Upper lobe of right lung (tissue), 1 donor: ENCODE measurements at regions of chr6 and their contacts with region 1.

Region 1: GRCh38 chr6:111709615-111710398 is 104.1 kb upstream of the TRAF3IP2 start:
- DNase-seq: no peak
- ATAC-seq: peak; percentile 92
- H3K4me3 ChIP-seq: no peak overlapping the region
- H3K27ac ChIP-seq: no peak overlapping the region
- H3K4me1 ChIP-seq: peaks cover 23% of the 10 kb centered on the region
- H3K27me3 ChIP-seq: no peaks in the 10 kb centered on the region
- CTCF ChIP-seq: peak; percentile 81

Region 2: DNA sequence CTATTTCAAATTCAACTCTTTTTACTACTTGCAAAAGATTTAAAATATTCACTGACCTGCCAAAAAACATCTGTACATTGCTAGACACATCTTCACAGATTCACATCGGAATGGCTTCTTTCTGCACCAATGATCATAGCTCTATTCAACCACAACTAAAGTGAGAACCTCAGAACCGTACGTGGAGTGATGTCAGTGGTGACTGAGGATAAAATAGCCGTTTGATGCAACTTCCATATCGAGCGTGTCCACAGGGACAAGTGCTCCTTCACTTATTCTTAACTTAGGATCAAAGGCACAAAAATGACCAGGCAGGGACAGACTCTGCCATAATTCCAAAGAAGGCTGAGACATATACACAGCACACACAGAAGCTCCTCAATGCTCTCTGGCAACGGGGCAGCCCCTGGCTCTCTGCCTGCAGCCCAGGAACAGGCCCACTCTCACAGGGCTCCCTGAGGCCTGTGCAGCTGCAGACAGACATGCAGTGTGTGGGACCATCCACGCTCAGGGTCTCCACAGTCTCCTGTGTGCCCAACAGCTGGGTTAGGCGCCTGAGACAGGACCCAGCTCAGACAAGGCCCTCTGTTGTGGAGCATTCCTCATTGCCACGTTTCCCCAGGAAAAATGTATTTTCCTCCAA is 140.6 kb after region 1 on chr6:
- intact Hi-C with region 1: loop called (anchors 10 kb)
- DNase-seq: no peak
- ATAC-seq: peak; percentile 30
- H3K4me3 ChIP-seq: no peak overlapping the region
- H3K27ac ChIP-seq: no peak overlapping the region
- H3K4me1 ChIP-seq: peaks cover 22% of the 10 kb centered on the region
- H3K27me3 ChIP-seq: no peaks in the 10 kb centered on the region
- CTCF ChIP-seq: no peak

Region 3: GRCh38 chr6:111992851-111993250 is 283.0 kb after region 1 on chr6:
- intact Hi-C with region 1: loop called (anchors 5 kb)
- DNase-seq: no peak
- ATAC-seq: no peak
- H3K4me3 ChIP-seq: no peak overlapping the region
- H3K27ac ChIP-seq: no peak overlapping the region
- H3K4me1 ChIP-seq: peaks cover 8% of the 10 kb centered on the region
- H3K27me3 ChIP-seq: no peaks in the 10 kb centered on the region
- CTCF ChIP-seq: no peak